BJ (cell line): ENCODE measurements at regions of chr16 and their contacts with region 1.

Region 1: DNA sequence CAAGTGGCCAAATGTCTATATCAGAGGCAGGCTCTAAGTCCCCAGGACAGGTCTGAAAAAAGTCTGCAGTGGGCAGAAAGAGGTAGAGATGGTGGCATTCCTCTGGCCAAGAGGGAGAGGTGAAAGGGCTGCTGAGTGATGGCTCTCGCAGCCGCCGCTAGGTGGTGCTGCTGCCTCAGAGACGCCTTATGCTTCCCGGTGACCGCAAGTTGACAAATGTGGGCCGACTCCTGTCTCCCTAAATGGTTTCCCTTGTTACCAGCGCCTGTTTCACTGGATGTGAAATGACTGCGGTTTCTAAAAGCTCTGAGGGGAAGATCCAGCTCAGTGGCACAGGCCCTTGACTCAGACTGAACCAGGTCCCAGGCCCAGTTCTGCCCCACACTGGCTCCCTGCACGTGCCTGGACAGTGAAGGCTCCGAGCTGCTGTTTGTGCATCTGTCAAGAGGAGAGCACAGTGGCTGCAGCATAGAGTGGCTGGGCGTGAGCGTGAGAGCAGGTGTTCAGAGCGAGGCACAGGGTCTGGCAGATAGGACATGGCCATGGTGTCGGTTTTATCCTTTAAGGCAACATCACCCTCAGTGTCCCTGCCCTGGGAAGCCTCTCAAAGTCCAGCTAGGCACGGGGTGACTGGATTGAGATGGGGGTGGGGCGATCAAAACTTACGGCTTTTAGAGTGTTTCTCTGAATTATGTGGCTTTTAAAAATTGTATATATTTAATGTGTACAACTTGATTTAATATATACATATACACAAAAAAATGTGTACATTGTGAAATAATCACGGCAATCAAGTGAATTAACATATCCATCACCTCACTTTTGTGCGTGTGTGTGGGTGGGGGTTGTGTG is 19.9 kb downstream of the CLEC16A start:
- DNase-seq: no peak
- H3K4me3 ChIP-seq: no peak overlapping the region
- H3K27me3 ChIP-seq: no peaks in the 10 kb centered on the region
- CTCF ChIP-seq: peak; percentile 96

Region 2: DNA sequence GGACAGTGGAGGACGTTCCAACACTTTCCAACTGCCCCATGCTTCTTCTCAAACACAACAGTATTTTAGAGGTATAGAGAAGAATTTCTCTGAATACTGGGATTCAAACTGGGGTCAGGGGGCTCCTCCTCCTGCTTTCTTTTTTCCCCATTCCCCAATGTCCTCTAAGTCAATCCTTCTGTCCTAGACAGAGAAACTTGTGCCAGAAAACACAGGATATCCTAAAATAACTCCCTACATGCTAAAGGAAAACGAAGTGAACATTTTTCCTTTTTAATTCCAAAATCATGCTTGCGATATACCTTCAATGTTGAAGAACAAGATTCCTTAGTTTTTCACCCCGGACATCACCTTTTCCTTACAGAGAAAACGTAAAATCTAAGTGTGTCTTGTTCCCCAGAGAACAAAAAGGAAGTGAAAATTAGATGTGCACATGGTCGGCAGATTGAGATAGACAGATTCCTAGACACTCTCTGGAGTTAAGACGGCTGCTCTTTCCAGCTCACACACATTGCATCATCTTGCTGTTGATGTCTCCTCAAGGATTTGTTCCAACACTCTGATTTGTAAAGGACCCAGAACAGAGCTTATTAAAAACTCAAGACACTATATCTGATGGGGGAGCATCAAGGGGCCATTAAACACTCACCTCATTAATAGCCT is 1010.2 kb before region 1 on chr16:
- CTCF ChIA-PET with region 1: no interaction called
- POLR2A ChIA-PET with region 1: no interaction called
- DNase-seq: no peak
- H3K4me3 ChIP-seq: no peak overlapping the region
- H3K27me3 ChIP-seq: no peaks in the 10 kb centered on the region
- CTCF ChIP-seq: no peak

Region 3: DNA sequence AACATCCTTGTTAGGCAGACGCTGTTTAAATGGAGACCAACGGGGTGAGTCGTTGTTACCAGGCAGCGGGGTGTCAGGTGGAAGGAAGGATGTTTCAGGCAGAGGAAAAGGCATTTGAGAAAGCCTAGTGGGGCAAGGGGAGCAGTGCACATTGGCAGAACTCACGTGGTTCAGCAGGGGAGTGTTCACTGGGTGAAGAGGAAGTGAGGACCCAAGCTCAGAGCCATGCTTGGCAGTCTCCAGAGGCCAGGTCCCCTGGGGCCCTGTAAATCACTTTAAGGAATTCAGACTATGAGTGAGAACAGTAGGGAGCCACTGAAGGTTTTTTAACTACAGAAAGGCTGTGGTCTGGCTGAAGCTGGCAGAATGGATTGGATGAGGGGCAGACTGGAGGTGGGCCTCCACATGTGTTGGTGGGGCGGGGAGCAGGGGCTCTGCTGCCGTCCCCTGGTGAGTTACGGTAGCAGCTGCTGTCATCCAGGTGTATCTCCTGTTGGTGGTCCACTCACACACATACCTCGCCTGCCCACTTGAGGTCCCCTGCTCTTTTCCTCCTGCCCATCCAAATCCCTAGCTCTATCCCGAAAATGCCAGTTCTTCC is 14.8 kb before region 1 on chr16:
- CTCF ChIA-PET with region 1: interaction called, 36 read pairs
- POLR2A ChIA-PET with region 1: no interaction called
- DNase-seq: no peak
- H3K4me3 ChIP-seq: no peak overlapping the region
- H3K27me3 ChIP-seq: no peaks in the 10 kb centered on the region
- CTCF ChIP-seq: 0 out of 2 replicates have a peak, but pooled peaks have one; percentile 3

Region 4: DNA sequence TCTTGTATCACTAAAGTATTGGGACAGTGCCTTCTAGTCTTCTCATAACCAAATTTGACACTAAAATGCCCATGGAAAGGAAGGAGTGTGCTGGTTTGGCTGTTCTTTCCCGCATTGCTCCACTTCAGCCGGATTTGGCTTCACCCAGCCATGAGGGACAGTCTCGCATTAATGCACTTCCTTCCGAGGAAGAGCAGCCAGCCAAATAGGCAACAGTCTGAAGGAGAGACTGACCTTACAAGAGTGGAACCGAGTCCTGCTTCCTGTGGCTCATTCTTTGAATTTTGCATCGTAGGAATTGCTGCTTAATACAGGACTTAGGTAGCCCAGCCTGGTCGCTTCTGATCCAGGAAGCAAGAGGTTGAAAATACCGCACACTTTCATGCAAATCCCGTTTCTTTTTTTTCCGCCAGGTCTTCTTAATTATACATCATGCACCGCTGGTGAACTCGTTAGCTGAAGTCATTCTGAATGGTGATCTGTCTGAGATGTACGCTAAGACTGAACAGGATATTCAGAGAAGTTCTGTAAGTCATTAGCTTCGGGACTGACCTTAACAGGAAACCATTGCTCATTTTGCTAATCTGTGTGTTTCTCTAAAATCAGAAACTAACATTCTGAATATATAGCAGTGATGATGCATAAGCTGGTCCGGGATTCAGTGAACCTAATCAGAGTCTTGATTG is 18.3 kb after region 1 on chr16:
- CTCF ChIA-PET with region 1: interaction called, 11 read pairs
- POLR2A ChIA-PET with region 1: no interaction called
- DNase-seq: no peak
- H3K4me3 ChIP-seq: no peak overlapping the region
- H3K27me3 ChIP-seq: no peaks in the 10 kb centered on the region
- CTCF ChIP-seq: no peak

Region 5: GRCh38 chr16:11356573-11357331 is 392.5 kb after region 1 on chr16:
- CTCF ChIA-PET with region 1: interaction called, 46 read pairs
- POLR2A ChIA-PET with region 1: no interaction called
- DNase-seq: no peak
- H3K4me3 ChIP-seq: no peak overlapping the region
- H3K27me3 ChIP-seq: no peaks in the 10 kb centered on the region
- CTCF ChIP-seq: peak; percentile 76

Region 6: GRCh38 chr16:11396241-11397048 is 432.2 kb after region 1 on chr16:
- CTCF ChIA-PET with region 1: interaction called, 19 read pairs
- POLR2A ChIA-PET with region 1: no interaction called
- DNase-seq: no peak
- H3K4me3 ChIP-seq: no peak overlapping the region
- H3K27me3 ChIP-seq: 0 out of 2 replicates have a peak, but pooled peaks cover 2% of the 10 kb centered on the region
- CTCF ChIP-seq: peak; percentile 99

Region 7: GRCh38 chr16:11407047-11407982 is 443.1 kb after region 1 on chr16:
- CTCF ChIA-PET with region 1: interaction called, 15 read pairs
- POLR2A ChIA-PET with region 1: no interaction called
- DNase-seq: peak; percentile 7
- H3K4me3 ChIP-seq: no peak overlapping the region
- H3K27me3 ChIP-seq: 0 out of 2 replicates have a peak, but pooled peaks cover 1% of the 10 kb centered on the region
- CTCF ChIP-seq: peak; percentile 66